CD4-positive, alpha-beta T cell (primary cell): ENCODE measurements at regions of chr12 and their contacts with region 1.

Region 1: DNA sequence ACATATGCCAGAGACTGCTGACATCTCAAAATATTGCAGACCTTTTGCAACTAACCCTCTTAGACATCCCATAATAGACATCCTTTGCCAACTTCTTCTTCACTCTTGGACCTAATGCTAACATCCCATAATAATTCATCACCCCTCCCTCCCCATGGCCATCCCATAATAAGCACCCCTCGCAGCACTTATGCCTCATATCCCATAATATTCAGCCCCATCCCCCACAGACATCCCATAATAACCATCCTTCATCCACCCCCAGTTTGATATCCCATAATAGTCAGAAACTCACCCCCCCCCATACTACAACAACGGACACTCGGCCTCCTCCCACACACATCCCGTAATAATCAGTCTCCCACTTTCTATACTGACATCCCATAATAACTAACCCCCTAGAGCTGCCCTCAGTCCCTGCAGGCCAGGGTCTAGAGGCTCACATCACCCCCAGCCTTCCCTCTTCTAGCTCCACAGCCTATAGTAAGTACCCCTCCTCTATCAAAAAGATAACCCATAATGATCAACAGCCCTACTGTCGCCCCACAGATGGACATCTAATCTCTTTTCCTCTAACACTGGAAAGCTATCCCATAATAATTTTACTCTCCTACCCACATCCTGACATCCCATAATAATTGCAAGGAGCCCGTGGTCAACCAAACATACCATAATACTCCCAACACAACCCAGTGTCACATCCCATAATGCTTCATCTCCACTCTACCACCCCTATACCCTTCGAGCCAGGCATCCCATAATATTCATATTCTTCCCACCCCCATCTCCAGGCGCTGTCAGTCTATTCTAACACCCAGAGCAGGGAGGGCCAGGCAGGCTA is 792 bp upstream of the CHD4 start:
- DNase-seq: peak in 12 of 14 experiments; percentile 24 to 89 (median 51)
- ATAC-seq: peak; percentile 59
- H3K4me3 ChIP-seq: no peak overlapping the region
- H3K4me3 Mint-ChIP-seq: no peak overlapping the region
- H3K27ac ChIP-seq: peak overlapping the region; percentile 63 to 94
- H3K27ac Mint-ChIP-seq: no peak overlapping the region
- H3K4me1 ChIP-seq: peaks cover 71% of the 10 kb centered on the region
- H3K4me1 Mint-ChIP-seq: peaks cover 54% of the 10 kb centered on the region
- H3K27me3 ChIP-seq: no peaks in the 10 kb centered on the region
- H3K27me3 Mint-ChIP-seq: no peaks in the 10 kb centered on the region
- CTCF ChIP-seq: no peak

Region 2: GRCh38 chr12:6563448-6564050 is 44.4 kb before region 1 on chr12:
- CTCF ChIA-PET with region 1: interaction called, 3 read pairs
- POLR2A ChIA-PET with region 1: interaction called, 10 read pairs
- intact Hi-C with region 1: loop called in 1 of 2 experiments (anchors 5 kb)
- DNase-seq: peak; percentile 51 to 80 (median 60)
- ATAC-seq: no peak
- H3K4me3 ChIP-seq: no peak overlapping the region
- H3K4me3 Mint-ChIP-seq: peak overlapping the region; percentile 69
- H3K27ac ChIP-seq: no peak overlapping the region
- H3K27ac Mint-ChIP-seq: peak overlapping the region; percentile 71
- H3K4me1 ChIP-seq: peaks cover 31% of the 10 kb centered on the region
- H3K4me1 Mint-ChIP-seq: peaks cover 48% of the 10 kb centered on the region
- H3K27me3 ChIP-seq: no peaks in the 10 kb centered on the region
- H3K27me3 Mint-ChIP-seq: no peaks in the 10 kb centered on the region
- CTCF ChIP-seq: peak; percentile 87

Region 3: DNA sequence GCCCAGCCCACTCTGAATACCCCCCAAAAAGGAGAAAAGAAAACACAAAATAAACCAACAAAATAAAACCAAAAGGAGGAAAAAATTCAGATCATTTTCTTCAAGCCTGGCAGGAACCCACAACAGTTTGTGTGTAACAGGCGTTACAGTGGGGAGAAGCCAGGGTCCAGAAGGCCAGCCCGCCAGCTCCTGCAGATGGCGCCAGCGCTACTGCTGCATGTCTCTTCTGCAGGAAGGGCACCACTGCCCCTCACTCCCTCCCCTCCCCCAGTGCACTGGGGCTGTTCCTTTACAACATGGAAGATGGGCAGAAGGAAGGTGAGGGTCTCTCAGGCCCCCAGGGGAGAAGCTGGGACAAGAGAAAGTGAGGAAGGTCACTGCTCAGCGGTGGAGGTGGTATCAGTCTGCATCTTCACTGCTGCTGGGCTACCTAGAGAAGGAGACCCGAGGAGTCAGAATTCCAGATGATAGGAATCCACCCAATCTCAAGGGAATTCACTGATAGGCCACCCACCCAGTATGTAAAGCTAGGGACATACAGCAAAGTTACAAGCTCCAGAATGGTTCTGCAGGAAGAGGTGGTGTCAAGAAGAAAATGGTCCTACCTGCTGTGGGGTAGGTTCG is 37.6 kb before region 1 on chr12:
- CTCF ChIA-PET with region 1: interaction called, 4 read pairs
- POLR2A ChIA-PET with region 1: interaction called, 10 read pairs
- intact Hi-C with region 1: loop called (anchors 2 to 5 kb)
- DNase-seq: peak in 9 of 14 experiments; percentile 23 to 71 (median 44)
- ATAC-seq: no peak
- H3K4me3 ChIP-seq: no peak overlapping the region
- H3K4me3 Mint-ChIP-seq: peak overlapping the region; percentile 100
- H3K27ac ChIP-seq: no peak overlapping the region
- H3K27ac Mint-ChIP-seq: peak overlapping the region; percentile 98
- H3K4me1 ChIP-seq: peaks cover 41% of the 10 kb centered on the region
- H3K4me1 Mint-ChIP-seq: peaks cover 45% of the 10 kb centered on the region
- H3K27me3 ChIP-seq: no peaks in the 10 kb centered on the region
- H3K27me3 Mint-ChIP-seq: no peaks in the 10 kb centered on the region
- CTCF ChIP-seq: peak; percentile 42

Region 4: GRCh38 chr12:6582959-6583358 is 25.0 kb before region 1 on chr12:
- CTCF ChIA-PET with region 1: no interaction called
- POLR2A ChIA-PET with region 1: no interaction called
- intact Hi-C with region 1: no loop called
- DNase-seq: no peak
- ATAC-seq: no peak
- H3K4me3 ChIP-seq: no peak overlapping the region
- H3K4me3 Mint-ChIP-seq: no peak overlapping the region
- H3K27ac ChIP-seq: no peak overlapping the region
- H3K27ac Mint-ChIP-seq: no peak overlapping the region
- H3K4me1 ChIP-seq: no peaks in the 10 kb centered on the region
- H3K4me1 Mint-ChIP-seq: no peaks in the 10 kb centered on the region
- H3K27me3 ChIP-seq: no peaks in the 10 kb centered on the region
- H3K27me3 Mint-ChIP-seq: no peaks in the 10 kb centered on the region
- CTCF ChIP-seq: no peak

Region 5: DNA sequence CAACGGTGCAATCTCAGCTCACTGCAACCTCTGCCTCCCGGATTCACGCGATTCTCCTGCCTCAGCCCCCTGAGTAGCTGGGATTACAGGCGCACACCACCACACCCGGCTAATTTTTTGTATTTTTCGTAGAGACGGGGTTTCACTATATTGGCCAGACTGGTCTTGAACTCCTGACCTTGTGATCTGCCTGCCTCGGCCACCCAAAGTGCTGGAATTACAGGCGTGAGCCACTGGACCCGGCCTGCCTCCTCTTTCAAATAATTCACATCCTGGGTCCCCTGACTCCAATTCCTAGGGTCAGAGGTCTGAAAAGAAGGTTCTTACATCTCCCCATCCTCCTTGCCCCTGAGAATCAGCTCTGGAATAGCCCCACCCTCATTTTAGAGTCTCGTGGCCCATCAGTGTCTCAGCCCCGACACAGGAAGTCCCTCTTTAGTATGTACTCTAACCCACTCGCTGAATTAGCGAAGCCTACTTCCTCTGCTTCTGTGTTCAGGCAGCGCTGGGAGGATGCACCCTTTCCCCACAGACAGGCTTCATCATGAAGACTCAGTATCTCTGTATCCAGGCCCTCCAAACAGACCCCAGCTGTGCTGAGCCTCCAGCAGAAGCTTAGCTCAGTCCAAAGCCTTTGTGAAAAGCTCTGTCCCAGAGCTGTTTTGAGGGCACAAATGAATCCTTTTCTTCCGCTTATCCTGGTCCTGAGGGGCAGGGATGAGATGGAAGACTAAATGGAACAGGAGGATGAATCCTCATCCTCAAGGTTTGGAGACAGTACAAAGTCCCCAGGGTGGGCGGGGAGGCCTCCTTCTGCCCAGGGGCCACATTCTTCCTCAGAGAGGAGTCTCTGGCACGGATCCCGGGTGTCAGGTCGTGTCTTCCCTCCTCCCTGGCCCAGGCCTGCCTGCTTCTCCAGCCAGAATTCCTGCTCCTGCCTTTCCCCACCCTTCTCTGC is 24.3 kb after region 1 on chr12:
- CTCF ChIA-PET with region 1: no interaction called
- POLR2A ChIA-PET with region 1: interaction called, 12 read pairs
- intact Hi-C with region 1: loop called in 1 of 2 experiments (anchors 2 kb)
- DNase-seq: peak in 13 of 14 experiments; percentile 29 to 84 (median 47)
- ATAC-seq: peak; percentile 81
- H3K4me3 ChIP-seq: peak overlapping the region; percentile 51
- H3K4me3 Mint-ChIP-seq: peak overlapping the region; percentile 78
- H3K27ac ChIP-seq: peak overlapping the region; percentile 66 to 67
- H3K27ac Mint-ChIP-seq: peak overlapping the region; percentile 91
- H3K4me1 ChIP-seq: peaks cover 70% of the 10 kb centered on the region
- H3K4me1 Mint-ChIP-seq: peaks cover 63% of the 10 kb centered on the region
- H3K27me3 ChIP-seq: no peaks in the 10 kb centered on the region
- H3K27me3 Mint-ChIP-seq: no peaks in the 10 kb centered on the region
- CTCF ChIP-seq: no peak